PC-3 (cell line): ENCODE measurements at regions of chr18 and their contacts with region 1.

Region 1: DNA sequence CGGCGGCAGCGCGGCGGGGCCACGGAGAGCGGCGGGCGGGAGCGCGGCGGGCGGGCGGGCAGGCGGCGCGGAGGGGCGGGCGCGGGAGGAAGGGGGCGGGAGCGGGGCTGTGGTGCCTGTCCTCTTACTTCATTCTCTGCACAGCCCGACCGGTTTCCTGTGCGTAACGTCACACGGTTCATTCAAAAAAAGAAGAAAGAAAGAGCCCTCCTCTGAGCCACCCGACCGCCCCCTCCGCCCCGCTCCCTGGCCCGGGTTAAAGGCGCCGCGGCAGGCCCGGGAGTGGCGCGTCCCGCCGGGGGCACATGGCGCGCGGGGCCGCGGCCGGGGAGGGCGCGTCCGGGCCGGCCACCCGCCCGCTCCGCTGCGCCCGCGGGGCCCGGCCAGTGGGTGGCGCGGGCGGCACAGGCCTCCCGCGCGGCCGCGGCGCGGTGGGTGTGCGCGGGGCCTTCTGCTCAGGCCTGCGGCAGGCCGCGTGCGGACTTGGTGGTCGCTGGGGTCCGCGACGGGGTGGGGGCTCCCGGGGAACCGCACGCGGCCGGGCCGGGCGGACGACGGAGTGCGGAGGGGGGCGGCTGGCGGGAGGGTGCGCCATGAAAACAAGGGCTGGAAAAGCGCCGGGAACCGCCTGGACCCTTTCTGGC is 599 bp upstream of the BCL2 start:
- DNase-seq: peak; percentile 63
- ATAC-seq: peak; percentile 67
- H3K4me3 ChIP-seq: peak overlapping the region; percentile 67
- H3K27ac ChIP-seq: no peak overlapping the region
- H3K4me1 ChIP-seq: peaks cover 27% of the 10 kb centered on the region
- H3K27me3 ChIP-seq: no peaks in the 10 kb centered on the region
- CTCF ChIP-seq: no peak

Region 2: GRCh38 chr18:62584241-62585120 is 735.7 kb before region 1 on chr18:
- CTCF ChIA-PET with region 1: no interaction called
- POLR2A ChIA-PET with region 1: no interaction called
- intact Hi-C with region 1: loop called (anchors 10 kb)
- DNase-seq: peak; percentile 90
- ATAC-seq: peak; percentile 83
- H3K4me3 ChIP-seq: no peak overlapping the region
- H3K27ac ChIP-seq: no peak overlapping the region
- H3K4me1 ChIP-seq: peaks cover 4% of the 10 kb centered on the region
- H3K27me3 ChIP-seq: no peaks in the 10 kb centered on the region
- CTCF ChIP-seq: peak; percentile 97

Region 3: DNA sequence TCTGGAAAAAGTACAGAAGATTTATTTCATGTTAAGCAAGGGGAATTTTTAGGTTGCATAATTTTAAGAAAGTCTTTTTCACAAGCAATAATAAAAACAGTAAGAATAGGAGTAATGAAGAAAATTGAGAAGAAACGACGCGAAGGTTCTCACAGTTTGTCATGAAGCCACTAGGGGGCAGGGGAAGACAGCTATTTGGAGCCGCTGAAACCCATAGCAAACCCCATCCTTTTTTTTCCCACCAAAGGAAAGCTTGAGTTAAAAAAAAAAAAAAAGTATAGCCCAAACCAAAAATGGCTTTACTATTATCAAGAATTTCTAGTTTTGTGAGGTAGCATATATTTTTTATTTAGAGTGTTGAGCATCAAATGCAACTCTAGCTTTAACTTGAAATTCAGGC is 303.9 kb before region 1 on chr18:
- CTCF ChIA-PET with region 1: interaction called, 8 read pairs
- POLR2A ChIA-PET with region 1: no interaction called
- intact Hi-C with region 1: loop called (anchors 1 kb)
- DNase-seq: peak; percentile 67
- ATAC-seq: peak; percentile 64; the same call in 1 of the 2 replicates
- H3K4me3 ChIP-seq: no peak overlapping the region
- H3K27ac ChIP-seq: no peak overlapping the region
- H3K4me1 ChIP-seq: no peaks in the 10 kb centered on the region
- H3K27me3 ChIP-seq: peaks cover 74% of the 10 kb centered on the region
- CTCF ChIP-seq: peak; percentile 80

Region 4: DNA sequence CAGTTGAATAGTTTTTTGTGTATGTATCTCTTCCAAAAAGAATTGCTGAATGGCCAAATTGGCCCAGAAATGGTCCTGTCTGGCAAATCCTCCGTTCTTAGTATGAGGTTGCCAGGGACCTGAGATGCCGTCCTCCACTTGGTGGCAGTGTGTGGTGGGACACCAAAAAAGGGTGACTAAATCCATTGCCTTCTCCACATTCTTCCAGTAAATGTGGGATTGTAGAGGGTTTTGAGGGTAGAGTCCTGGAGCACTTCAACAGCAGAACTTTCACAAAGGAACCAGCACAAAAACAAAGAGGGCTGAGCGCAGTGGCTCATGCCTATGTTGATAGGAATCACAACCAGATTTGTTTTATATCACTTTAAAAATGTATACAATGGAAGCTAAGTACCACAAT is 200.5 kb before region 1 on chr18:
- CTCF ChIA-PET with region 1: interaction called, 6 read pairs
- POLR2A ChIA-PET with region 1: interaction called, 4 read pairs
- intact Hi-C with region 1: loop called (anchors 2 kb)
- DNase-seq: peak; percentile 39
- ATAC-seq: peak; percentile 74
- H3K4me3 ChIP-seq: no peak overlapping the region
- H3K27ac ChIP-seq: no peak overlapping the region
- H3K4me1 ChIP-seq: no peaks in the 10 kb centered on the region
- H3K27me3 ChIP-seq: peaks cover 41% of the 10 kb centered on the region
- CTCF ChIP-seq: peak; percentile 64

Region 5: DNA sequence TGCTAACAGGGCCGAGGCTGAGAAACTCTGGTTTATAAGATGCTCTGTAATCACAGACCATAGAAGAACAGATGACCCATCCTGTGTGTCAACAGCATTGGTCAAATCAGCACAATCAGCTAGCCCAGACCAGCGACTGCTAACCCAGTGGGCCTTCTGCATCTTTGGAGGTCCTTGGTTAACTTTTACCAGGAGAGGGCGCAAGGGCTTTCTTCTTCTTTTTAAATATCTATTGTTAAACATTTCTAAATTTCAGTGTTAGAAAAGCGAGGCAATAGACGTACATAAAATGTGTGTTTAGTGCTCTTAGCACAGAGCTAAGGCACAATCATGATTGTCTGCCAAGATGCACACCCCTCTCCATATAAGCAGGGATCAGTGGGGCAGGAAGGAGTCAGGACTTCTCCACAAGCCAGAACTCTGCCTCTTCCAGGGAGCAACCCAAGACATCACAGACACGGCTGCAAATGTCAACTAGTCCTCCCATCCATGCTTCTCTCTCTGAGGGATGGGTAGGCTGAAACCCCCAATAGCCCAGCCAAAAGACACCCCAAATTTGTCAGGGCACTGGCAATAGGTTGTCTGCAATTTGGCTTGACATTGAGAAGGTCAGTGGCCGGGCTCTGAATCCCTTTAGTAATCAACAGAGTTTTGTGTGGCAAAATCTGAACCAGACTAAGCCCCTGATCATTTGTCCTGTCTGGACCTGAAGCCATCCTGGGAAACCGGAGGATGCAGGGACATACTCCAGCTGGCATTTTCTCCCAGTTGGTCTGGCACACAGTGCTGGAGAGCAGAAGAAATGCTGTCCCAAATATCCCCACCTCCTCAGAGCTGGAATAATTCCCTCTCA is 188.8 kb before region 1 on chr18:
- CTCF ChIA-PET with region 1: interaction called, 3 read pairs
- POLR2A ChIA-PET with region 1: no interaction called
- intact Hi-C with region 1: loop called (anchors 1 kb)
- DNase-seq: peak; percentile 69
- ATAC-seq: peak; percentile 62
- H3K4me3 ChIP-seq: no peak overlapping the region
- H3K27ac ChIP-seq: no peak overlapping the region
- H3K4me1 ChIP-seq: no peaks in the 10 kb centered on the region
- H3K27me3 ChIP-seq: peaks cover 8% of the 10 kb centered on the region; the same call in 1 of the 2 replicates
- CTCF ChIP-seq: peak; percentile 77

Region 6: DNA sequence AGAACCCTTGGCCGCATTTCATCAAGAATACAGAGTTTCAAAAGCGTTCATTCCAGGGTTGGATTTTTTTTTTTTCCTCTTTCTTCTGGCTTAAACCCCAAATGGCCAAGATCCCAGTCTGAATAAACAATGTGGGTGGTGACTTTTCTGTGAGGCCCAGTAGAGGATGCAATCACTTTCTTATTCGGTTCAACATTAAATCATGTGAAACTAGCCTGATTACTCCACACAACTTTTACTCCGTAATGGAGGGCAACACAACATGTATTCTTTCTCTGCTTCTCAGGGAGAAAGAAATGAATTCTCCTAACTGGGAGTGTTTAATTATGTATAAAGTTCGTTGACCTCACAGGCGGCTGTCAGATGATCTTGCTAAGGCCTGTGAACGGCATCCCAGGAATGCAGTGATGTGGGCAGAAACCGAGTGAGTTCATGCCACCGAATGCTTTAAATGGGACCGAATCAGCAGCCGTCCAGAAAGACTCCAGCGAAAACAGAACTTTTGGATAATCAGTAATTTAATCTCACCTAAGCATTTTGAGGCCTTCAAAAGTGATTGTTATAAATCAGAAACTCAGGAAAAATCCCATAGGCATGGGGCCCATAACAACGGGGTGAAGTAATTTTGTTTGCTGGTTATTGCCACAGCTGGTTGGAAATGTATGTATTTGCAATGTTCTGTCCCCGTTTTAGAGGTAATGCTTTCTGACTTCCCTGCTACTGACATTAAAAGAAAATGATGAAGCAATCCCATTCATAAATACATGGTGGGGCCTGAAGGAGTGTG is 82.1 kb before region 1 on chr18:
- CTCF ChIA-PET with region 1: no interaction called
- POLR2A ChIA-PET with region 1: no interaction called
- intact Hi-C with region 1: loop called (anchors 5 kb)
- DNase-seq: peak; percentile 74
- ATAC-seq: peak; percentile 87
- H3K4me3 ChIP-seq: peak overlapping the region; percentile 45
- H3K27ac ChIP-seq: peak overlapping the region; percentile 29
- H3K4me1 ChIP-seq: peaks cover 19% of the 10 kb centered on the region
- H3K27me3 ChIP-seq: no peaks in the 10 kb centered on the region
- CTCF ChIP-seq: no peak